GM10248 (cell line): ENCODE measurements at regions of chr12 and their contacts with region 1.

Region 1: GRCh38 chr12:100404769-100405407 is 48.0 kb downstream of the SLC17A8 start:
- DNase-seq: peak; percentile 32
- CTCF ChIP-seq: peak; percentile 62

Region 2: DNA sequence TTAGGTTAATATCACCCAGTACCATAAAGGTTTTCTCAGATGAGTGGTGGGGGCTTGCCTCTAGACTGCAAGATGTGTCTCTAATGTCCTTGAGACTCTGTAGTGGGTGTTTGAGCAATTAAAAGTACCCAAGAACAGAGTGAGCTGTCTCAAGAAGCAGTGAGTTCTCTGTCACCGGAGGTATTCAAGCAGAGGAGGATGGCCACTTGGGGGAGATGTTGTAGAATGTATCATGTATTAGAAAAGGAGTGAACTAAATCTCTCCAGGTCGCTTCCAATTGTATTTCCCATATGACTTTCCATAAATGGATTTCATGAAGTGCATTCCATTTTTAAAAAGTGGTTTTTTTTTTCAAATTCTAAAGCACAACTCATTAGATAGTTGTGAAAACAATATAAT is 13.0 kb before region 1 on chr12:
- CTCF ChIA-PET with region 1: interaction called, 10 read pairs
- POLR2A ChIA-PET with region 1: no interaction called
- DNase-seq: no peak
- CTCF ChIP-seq: no peak